ENCODE measurements at regions of chr11 and their contacts with region 1.

Region 1: GRCh38 chr11:96342961-96343711 is at the start of gene MAML2:
- DNase-seq: peak; percentile 83 to 97 (median 89)
- ATAC-seq: peak; percentile 88
- H3K4me3 ChIP-seq: peak within 1 kb of the TSS; percentile 92
- H3K4me3 Mint-ChIP-seq: peak within 1 kb of the TSS; percentile 97
- H3K27ac ChIP-seq: peak within 1 kb of the TSS; percentile 45 to 86
- H3K27ac Mint-ChIP-seq: peak within 1 kb of the TSS; percentile 87
- H3K4me1 ChIP-seq: peaks cover 43% of the 10 kb centered on the region
- H3K4me1 Mint-ChIP-seq: peaks cover 32% of the 10 kb centered on the region
- H3K27me3 ChIP-seq: no peaks in the 10 kb centered on the region
- H3K27me3 Mint-ChIP-seq: no peaks in the 10 kb centered on the region
- CTCF ChIP-seq: peak; percentile 96
- total RNA-seq, gene MAML2: 58.8 to 59.8 TPM

Region 2: DNA sequence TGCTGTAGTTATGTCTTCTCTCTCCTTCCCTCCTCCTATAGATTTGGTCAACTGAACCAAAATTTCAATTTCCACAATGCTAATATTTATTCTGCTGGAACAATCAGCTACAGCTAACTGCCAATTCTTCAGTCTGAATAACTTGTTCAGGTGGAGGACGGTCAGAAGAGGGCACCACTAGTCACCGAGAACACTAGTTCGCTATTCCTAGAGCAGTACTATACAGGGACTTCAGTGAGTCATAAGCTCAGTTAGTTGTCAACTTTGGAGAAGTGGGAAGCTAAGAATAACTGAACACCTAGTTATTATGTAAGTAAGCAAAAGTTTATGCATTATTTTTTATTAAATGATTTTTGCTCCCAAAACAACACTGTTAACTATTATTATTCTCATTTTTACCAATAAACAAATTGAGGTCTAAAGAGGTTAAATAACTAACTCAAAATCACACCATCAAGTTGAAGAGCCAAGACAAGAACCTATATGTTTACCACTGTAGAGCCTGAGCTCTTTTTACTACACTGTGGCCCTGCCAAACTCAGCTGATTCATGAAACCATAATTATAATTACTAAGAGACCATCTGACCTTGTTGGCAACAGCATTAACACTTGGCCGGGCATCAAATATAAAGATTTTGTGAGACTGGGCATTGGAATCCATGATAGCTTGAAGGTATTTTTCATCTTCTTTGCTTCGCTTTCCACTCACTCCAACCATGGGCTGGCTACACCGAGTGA is 493.9 kb before region 1 on chr11:
- CTCF ChIA-PET with region 1: interaction called, 6 read pairs
- POLR2A ChIA-PET with region 1: no interaction called
- intact Hi-C with region 1: loop called in 1 of 2 experiments (anchors 1 kb)
- DNase-seq: peak in 9 of 14 experiments; percentile 2 to 48 (median 17)
- ATAC-seq: peak; percentile 65
- H3K4me3 ChIP-seq: no peak overlapping the region
- H3K4me3 Mint-ChIP-seq: no peak overlapping the region
- H3K27ac ChIP-seq: no peak overlapping the region
- H3K27ac Mint-ChIP-seq: no peak overlapping the region
- H3K4me1 ChIP-seq: no peaks in the 10 kb centered on the region
- H3K4me1 Mint-ChIP-seq: no peaks in the 10 kb centered on the region
- H3K27me3 ChIP-seq: no peaks in the 10 kb centered on the region
- H3K27me3 Mint-ChIP-seq: no peaks in the 10 kb centered on the region
- CTCF ChIP-seq: peak; percentile 27

Region 3: DNA sequence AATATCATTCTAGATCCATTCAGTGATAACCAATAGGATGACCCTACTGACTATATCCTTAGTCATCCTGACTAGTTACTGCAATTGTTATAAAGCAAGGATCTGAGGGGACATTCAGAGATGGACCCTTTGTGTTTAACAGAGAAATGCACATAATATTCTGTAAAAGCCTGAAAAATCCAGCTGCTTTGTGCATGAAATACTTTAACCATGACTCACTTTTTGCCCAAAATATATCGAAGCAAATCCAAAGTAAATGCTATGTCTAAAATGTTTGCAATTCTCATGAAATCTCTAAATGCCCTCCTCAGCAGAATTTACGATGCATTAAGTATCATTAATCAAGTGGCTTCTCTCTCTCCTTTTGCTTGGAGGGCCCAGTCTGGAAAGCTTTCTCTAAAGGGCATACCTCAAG is 240.5 kb before region 1 on chr11:
- CTCF ChIA-PET with region 1: interaction called, 9 read pairs
- POLR2A ChIA-PET with region 1: interaction called, 6 read pairs
- intact Hi-C with region 1: loop called (anchors 5 kb)
- DNase-seq: no peak
- ATAC-seq: no peak
- H3K4me3 ChIP-seq: no peak overlapping the region
- H3K4me3 Mint-ChIP-seq: no peak overlapping the region
- H3K27ac ChIP-seq: no peak overlapping the region
- H3K27ac Mint-ChIP-seq: peak overlapping the region; percentile 52
- H3K4me1 ChIP-seq: peaks cover 4% of the 10 kb centered on the region
- H3K4me1 Mint-ChIP-seq: peaks cover 52% of the 10 kb centered on the region
- H3K27me3 ChIP-seq: no peaks in the 10 kb centered on the region
- H3K27me3 Mint-ChIP-seq: no peaks in the 10 kb centered on the region
- CTCF ChIP-seq: no peak

Region 4: GRCh38 chr11:96228473-96228891 is 114.7 kb before region 1 on chr11:
- CTCF ChIA-PET with region 1: interaction called, 15 read pairs
- POLR2A ChIA-PET with region 1: interaction called, 3 read pairs
- intact Hi-C with region 1: no loop called
- DNase-seq: no peak
- ATAC-seq: no peak
- H3K4me3 ChIP-seq: no peak overlapping the region
- H3K4me3 Mint-ChIP-seq: peak overlapping the region; percentile 14
- H3K27ac ChIP-seq: no peak overlapping the region
- H3K27ac Mint-ChIP-seq: peak overlapping the region; percentile 86
- H3K4me1 ChIP-seq: peaks cover 18% of the 10 kb centered on the region
- H3K4me1 Mint-ChIP-seq: peaks cover 89% of the 10 kb centered on the region
- H3K27me3 ChIP-seq: no peaks in the 10 kb centered on the region
- H3K27me3 Mint-ChIP-seq: no peaks in the 10 kb centered on the region
- CTCF ChIP-seq: no peak

Region 5: DNA sequence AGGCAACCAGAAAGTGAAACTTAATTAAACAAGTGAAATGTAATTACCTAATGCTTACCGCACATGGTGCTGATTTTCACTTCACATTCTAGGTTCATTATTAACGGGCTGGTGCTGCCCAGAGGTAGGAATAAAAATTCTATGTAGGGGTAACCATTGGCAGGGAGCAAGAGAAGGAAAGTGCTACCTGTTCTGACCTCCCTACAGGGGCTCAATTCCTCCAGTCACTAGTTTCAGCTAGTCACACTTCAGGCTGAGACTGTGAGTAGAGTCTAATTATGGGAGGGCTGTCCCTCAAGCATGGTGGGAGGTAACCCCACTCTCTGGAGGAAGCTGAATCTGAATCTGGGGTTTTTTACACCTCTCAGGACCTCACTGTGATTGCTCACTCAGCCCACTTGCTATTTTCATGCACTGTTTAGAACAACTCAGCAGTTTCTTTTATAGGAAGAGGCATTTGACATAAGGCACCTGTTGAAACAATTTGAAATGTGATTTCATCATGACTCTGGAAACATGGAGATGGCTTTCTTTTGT is 75.6 kb before region 1 on chr11:
- CTCF ChIA-PET with region 1: interaction called, 13 read pairs
- POLR2A ChIA-PET with region 1: interaction called, 27 read pairs
- intact Hi-C with region 1: loop called (anchors 5 kb)
- DNase-seq: peak in 5 of 14 experiments; percentile 18 to 71 (median 66)
- ATAC-seq: peak; percentile 78
- H3K4me3 ChIP-seq: peak overlapping the region; percentile 25
- H3K4me3 Mint-ChIP-seq: peak overlapping the region; percentile 81
- H3K27ac ChIP-seq: peak overlapping the region; percentile 39 to 43
- H3K27ac Mint-ChIP-seq: peak overlapping the region; percentile 83
- H3K4me1 ChIP-seq: peaks cover 25% of the 10 kb centered on the region
- H3K4me1 Mint-ChIP-seq: peaks cover 84% of the 10 kb centered on the region
- H3K27me3 ChIP-seq: no peaks in the 10 kb centered on the region
- H3K27me3 Mint-ChIP-seq: no peaks in the 10 kb centered on the region
- CTCF ChIP-seq: no peak

Region 6: GRCh38 chr11:96306933-96307775 is 36.0 kb before region 1 on chr11:
- CTCF ChIA-PET with region 1: interaction called, 10 read pairs
- POLR2A ChIA-PET with region 1: interaction called, 16 read pairs
- intact Hi-C with region 1: loop called (anchors 5 kb)
- DNase-seq: peak in 5 of 14 experiments; percentile 7 to 55 (median 46)
- ATAC-seq: peak; percentile 76
- H3K4me3 ChIP-seq: no peak overlapping the region
- H3K4me3 Mint-ChIP-seq: peak overlapping the region; percentile 69
- H3K27ac ChIP-seq: no peak overlapping the region
- H3K27ac Mint-ChIP-seq: peak overlapping the region; percentile 85
- H3K4me1 ChIP-seq: peaks cover 11% of the 10 kb centered on the region
- H3K4me1 Mint-ChIP-seq: peaks cover 92% of the 10 kb centered on the region
- H3K27me3 ChIP-seq: no peaks in the 10 kb centered on the region
- H3K27me3 Mint-ChIP-seq: no peaks in the 10 kb centered on the region
- CTCF ChIP-seq: no peak

Region 7: GRCh38 chr11:96885405-96885804 is 542.3 kb after region 1 on chr11:
- CTCF ChIA-PET with region 1: no interaction called
- POLR2A ChIA-PET with region 1: no interaction called
- intact Hi-C with region 1: no loop called
- DNase-seq: no peak
- ATAC-seq: no peak
- H3K4me3 ChIP-seq: no peak overlapping the region
- H3K4me3 Mint-ChIP-seq: no peak overlapping the region
- H3K27ac ChIP-seq: no peak overlapping the region
- H3K27ac Mint-ChIP-seq: no peak overlapping the region
- H3K4me1 ChIP-seq: no peaks in the 10 kb centered on the region
- H3K4me1 Mint-ChIP-seq: no peaks in the 10 kb centered on the region
- H3K27me3 ChIP-seq: no peaks in the 10 kb centered on the region
- H3K27me3 Mint-ChIP-seq: no peaks in the 10 kb centered on the region
- CTCF ChIP-seq: no peak

Measured in CD4-positive, alpha-beta T cell (primary cell).